Stomach (tissue), 19 donors: ENCODE measurements at regions of chr1 and their contacts with region 1.

Region 1: GRCh38 chr1:39926343-39926793 is 24.7 kb upstream of the MYCL start:
- DNase-seq: peak in 1 of 2 donors; percentile 25
- H3K4me3 ChIP-seq: no peak overlapping the region
- H3K27ac ChIP-seq: no peak overlapping the region
- H3K4me1 ChIP-seq: peaks cover 0 to 22% (median 16%) of the 10 kb centered on the region in 4 donors
- H3K27me3 ChIP-seq: peaks cover 0 to 16% (median 5%) of the 10 kb centered on the region in 3 donors
- CTCF ChIP-seq: no peak
- EP300 ChIP-seq: no peak
- POLR2A ChIP-seq: no peak

Region 2: DNA sequence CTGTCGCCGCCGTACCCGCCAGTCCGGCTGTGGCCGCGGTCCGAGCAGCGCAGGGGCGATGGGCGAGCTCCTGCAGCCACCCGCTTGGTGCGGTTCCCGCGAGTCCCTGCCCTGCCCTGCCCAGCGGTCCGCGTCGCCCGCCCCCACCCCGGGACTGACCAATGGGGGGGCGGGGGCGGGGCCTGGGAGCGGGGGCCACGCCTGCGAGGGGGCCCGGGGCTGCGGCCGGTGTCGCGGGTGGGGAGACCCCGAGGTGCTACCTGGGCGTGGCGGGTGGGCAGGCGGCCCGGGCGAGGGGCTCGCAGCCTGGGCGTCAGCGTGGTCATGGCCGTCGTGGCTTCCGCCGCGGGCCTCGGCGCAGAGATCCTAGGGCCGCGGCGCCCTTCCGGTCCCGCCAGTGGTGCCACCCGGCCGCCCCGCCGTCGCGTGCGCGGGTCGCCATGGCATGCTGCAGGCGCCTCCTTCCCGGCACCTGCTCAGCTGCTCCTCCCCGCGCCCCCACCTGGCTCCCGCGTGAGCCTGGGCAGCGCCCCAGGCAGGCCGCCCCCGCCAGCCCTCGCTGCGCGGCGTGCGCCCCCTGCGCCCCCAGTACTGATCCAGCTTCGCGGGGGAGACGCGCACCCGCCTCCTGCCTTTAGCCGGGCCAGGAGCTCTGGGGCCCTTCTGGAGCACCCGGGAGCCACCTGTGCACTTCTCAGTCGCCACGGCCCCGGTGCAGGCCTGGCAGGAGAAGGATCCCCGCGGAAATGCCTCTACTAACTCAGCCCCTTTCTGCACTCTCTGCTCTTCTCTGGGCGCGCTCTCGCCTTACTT is 137.4 kb before region 1 on chr1 and contains the start of gene BMP8B:
- intact Hi-C with region 1: no loop called
- DNase-seq: peak; percentile 73 to 82
- H3K4me3 ChIP-seq: peak within 1 kb of the TSS; percentile 57 to 74 (median 67)
- H3K27ac ChIP-seq: peak within 1 kb of the TSS in 4 of 5 donors; percentile 67 to 82 (median 76)
- H3K4me1 ChIP-seq: peaks cover 13 to 22% (median 18%) of the 10 kb centered on the region in 4 donors
- H3K27me3 ChIP-seq: peaks cover 0 to 47% (median 23%) of the 10 kb centered on the region in 3 donors
- CTCF ChIP-seq: no peak
- EP300 ChIP-seq: no peak
- POLR2A ChIP-seq: no peak
- total RNA-seq, gene BMP8B: 0.14 to 5.2 (median 1.6) TPM in 4 of 5 donors, not detected in the other

Region 3: GRCh38 chr1:39799770-39800470 is 126.4 kb before region 1 on chr1:
- intact Hi-C with region 1: no loop called
- DNase-seq: peak; percentile 71 to 72
- H3K4me3 ChIP-seq: peak overlapping the region in 2 of 4 donors; percentile 8 to 12
- H3K27ac ChIP-seq: peak overlapping the region in 2 of 5 donors; percentile 13 to 46
- H3K4me1 ChIP-seq: peaks cover 0 to 10% (median 3%) of the 10 kb centered on the region in 4 donors
- H3K27me3 ChIP-seq: no peaks in the 10 kb centered on the region
- CTCF ChIP-seq: peak in 5 of 7 experiments; percentile 59 to 85 (median 80)
- EP300 ChIP-seq: no peak
- POLR2A ChIP-seq: no peak

Region 4: DNA sequence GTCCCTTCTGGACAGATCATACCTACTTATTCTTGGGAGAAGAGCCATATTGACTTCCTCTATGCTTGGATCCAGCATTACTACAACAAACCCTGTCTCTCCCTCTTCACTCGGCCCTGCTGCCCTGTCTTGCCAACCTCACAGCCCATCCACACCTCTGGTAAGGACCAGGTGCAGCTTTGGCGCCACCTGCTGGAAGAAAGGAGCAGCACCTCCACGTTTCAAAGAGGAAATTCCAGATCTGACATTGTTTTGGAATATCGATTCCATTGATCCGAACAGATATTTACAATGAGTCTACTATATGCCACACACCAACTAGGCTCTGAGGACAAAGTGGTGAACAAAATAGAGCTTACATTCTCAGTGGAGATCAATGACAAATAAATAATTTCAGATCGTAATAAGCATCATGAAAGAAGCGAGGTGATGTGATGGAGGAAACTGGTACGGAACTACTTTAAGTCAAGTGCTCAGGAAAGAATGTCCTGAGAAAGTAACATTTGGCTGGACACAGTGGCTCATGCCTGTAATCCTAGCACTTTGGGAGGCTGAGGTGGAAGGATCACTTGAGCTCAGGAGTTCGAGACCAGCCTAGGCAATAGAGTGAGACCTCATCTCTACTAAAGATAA is 47.3 kb after region 1 on chr1:
- intact Hi-C with region 1: loop called (anchors 5 kb)
- DNase-seq: peak; percentile 86 to 88
- H3K4me3 ChIP-seq: no peak overlapping the region
- H3K27ac ChIP-seq: no peak overlapping the region
- H3K4me1 ChIP-seq: peaks cover 0 to 16% (median 6%) of the 10 kb centered on the region in 4 donors
- H3K27me3 ChIP-seq: no peaks in the 10 kb centered on the region
- CTCF ChIP-seq: peak in 5 of 7 experiments; percentile 88 to 98 (median 95)
- EP300 ChIP-seq: no peak
- POLR2A ChIP-seq: no peak

Region 5: GRCh38 chr1:40029608-40030007 is 103.2 kb after region 1 on chr1:
- intact Hi-C with region 1: loop called (anchors 10 kb)
- DNase-seq: peak in 1 of 2 donors; percentile 34
- H3K4me3 ChIP-seq: no peak overlapping the region
- H3K27ac ChIP-seq: no peak overlapping the region
- H3K4me1 ChIP-seq: peaks cover 0 to 13% (median 9%) of the 10 kb centered on the region in 4 donors
- H3K27me3 ChIP-seq: no peaks in the 10 kb centered on the region
- CTCF ChIP-seq: no peak
- EP300 ChIP-seq: no peak
- POLR2A ChIP-seq: no peak

Region 6: DNA sequence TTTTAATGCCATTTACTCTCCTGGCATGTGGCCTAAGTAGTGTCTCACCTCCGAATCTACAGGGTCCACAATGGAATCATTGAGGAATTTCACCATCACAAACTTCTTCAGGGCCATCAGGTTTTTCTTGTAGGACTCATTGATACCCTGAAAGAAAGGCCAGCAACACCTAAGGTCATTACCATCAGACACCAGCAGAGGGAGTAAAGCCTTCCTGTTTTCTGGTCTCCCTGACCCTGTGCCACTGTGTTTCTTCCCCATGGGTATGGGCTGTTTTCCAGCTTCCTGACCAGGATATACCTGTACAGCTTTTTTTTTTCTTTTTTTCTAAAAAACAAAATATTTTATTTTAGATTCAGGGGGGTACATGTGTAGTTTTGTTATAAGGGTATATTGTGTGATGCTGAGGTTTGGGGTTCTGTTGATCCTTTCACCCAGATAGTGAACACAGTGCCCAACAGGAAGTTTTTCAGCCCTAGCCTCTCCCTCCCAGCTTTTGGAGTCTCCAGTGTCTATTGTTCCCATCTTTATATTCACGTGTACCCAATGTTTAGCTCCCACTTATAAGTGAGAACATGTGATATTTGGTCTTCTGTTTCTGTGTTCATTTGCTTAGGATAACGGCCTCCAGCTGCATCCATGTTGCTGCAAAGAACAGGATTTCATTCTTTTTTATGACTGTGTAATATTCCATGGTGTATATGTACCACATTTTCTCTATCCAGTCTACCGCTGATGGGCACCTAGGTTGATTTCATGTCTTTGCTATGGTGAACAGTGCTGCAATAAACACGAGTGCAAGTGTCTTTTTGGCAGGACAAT is 152.4 kb after region 1 on chr1:
- intact Hi-C with region 1: no loop called
- DNase-seq: peak; percentile 48 to 78
- H3K4me3 ChIP-seq: no peak overlapping the region
- H3K27ac ChIP-seq: peak overlapping the region in 1 of 5 donors; percentile 52
- H3K4me1 ChIP-seq: peaks cover 0 to 31% (median 0%) of the 10 kb centered on the region in 4 donors
- H3K27me3 ChIP-seq: no peaks in the 10 kb centered on the region
- CTCF ChIP-seq: peak in 4 of 7 experiments; percentile 43 to 68 (median 60)
- EP300 ChIP-seq: no peak
- POLR2A ChIP-seq: no peak

Region 7: DNA sequence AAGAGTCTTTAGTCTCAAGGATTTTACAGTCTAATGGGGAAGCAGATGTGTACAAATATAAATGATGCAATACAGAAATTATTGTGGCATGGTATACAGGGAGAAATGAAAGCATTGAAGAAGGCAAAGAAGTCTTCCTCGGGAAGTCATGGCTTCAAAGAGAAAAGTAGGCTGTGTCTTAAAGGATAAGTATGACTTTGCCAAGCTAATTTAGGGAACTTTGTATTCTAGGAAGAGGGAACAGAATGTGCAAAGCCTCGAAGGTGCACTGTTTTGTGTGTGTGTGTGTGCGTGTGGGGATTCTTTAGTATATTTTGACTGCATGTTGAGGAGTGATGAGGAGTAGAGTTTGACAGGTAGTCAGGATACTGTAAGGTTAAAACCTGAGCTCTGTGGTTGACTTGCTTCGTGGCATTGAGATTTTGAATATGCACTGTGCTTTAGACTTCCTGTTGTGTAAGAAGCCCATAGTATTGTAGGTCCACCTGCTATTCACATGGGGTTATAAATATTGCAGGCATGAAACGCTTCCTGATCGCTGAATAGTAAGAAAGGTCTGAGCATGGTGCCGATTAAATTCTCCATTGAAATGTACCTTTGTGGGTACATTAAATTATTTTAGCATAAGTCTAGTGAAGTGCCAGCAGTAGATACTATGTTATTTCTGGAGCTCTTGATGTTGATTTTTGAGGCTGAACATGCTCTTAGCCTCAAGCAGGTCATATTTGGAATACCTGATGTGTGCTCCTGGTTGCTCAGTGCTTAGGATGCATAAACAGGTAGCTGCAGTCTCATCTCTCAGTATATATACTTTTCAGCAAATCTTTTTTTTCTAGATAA is 455.1 kb after region 1 on chr1:
- intact Hi-C with region 1: no loop called
- DNase-seq: no peak
- H3K4me3 ChIP-seq: peak overlapping the region in 3 of 4 donors; percentile 5 to 11 (median 8)
- H3K27ac ChIP-seq: peak overlapping the region; percentile 53 to 99 (median 88)
- H3K4me1 ChIP-seq: peaks cover 57 to 98% (median 77%) of the 10 kb centered on the region in 4 donors
- H3K27me3 ChIP-seq: no peaks in the 10 kb centered on the region
- CTCF ChIP-seq: no peak
- EP300 ChIP-seq: no peak
- POLR2A ChIP-seq: no peak